ENCODE measurements at regions of chr15 and their contacts with region 1.

Region 1: DNA sequence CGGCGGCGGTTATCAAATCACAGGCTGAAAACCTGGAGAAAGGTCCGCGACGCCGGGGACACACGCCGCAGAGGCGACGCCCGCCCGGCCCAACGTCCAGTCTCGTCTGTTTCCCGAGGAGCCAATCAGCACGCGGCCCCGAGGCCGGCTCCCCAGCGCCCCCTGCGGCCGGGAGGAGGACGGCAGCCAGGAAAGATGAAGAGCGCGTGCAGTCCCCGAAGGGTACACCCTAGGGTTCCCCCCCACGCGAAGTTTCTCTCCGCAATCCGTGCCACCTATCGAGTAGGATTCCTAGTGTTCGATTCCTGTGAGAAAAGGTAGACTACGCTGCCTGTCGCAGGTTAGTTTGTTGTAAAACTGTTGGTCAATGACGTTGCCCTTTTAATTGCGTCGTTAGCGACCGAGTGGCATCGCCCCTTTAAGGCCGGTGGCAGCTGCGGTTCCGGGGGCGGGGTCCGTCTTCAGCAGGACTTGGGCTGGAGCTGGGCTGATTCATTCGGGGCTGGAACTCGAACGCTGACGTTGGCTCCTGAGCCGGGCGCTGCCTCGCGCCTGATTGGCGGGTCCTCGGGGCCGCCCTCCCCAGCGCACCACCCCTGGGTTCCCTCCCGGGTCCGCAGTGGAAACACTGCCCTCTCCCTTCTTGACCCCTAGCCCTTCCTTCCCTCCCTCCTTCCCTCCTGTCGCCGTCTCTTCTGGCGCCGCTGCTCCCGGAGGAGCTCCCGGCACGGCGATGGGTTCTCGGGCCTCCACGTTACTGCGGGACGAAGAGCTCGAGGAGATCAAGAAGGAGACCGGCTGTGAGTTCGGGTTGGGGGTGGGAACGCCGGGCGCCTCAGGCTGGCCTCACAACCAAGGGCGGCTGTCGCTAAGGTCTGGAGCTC is at the starts of genes CHP1 and EXD1:
- DNase-seq: peak; percentile 98 to 99 (median 99)
- H3K4me3 ChIP-seq: peak within 1 kb of the TSS; percentile 68 to 98 (median 88)
- H3K27ac ChIP-seq: peak within 1 kb of the TSS; percentile 93 to 96 (median 93)
- H3K4me1 ChIP-seq: peaks cover 17 to 22% of the 10 kb centered on the region in 2 donors
- H3K27me3 ChIP-seq: no peaks in the 10 kb centered on the region
- CTCF ChIP-seq: peak; percentile 92 to 96 (median 95)
- POLR2A ChIP-seq: peak; percentile 88 to 96
- total RNA-seq, gene CHP1: 106 to 387 (median 174) TPM
- total RNA-seq, gene EXD1: 0.11 TPM in 1 of 9 donors, not detected in the others

Region 2: GRCh38 chr15:41283653-41284426 is 52.9 kb after region 1 on chr15:
- intact Hi-C with region 1: loop called in 1 of 2 experiments (anchors 10 kb)
- DNase-seq: peak; percentile 99
- H3K4me3 ChIP-seq: peak overlapping the region; percentile 72 to 100 (median 80)
- H3K27ac ChIP-seq: peak overlapping the region; percentile 91 to 98 (median 94)
- H3K4me1 ChIP-seq: peaks cover 38% of the 10 kb centered on the region in 2 donors
- H3K27me3 ChIP-seq: no peaks in the 10 kb centered on the region
- CTCF ChIP-seq: no peak
- POLR2A ChIP-seq: peak; percentile 89 to 97

Region 3: DNA sequence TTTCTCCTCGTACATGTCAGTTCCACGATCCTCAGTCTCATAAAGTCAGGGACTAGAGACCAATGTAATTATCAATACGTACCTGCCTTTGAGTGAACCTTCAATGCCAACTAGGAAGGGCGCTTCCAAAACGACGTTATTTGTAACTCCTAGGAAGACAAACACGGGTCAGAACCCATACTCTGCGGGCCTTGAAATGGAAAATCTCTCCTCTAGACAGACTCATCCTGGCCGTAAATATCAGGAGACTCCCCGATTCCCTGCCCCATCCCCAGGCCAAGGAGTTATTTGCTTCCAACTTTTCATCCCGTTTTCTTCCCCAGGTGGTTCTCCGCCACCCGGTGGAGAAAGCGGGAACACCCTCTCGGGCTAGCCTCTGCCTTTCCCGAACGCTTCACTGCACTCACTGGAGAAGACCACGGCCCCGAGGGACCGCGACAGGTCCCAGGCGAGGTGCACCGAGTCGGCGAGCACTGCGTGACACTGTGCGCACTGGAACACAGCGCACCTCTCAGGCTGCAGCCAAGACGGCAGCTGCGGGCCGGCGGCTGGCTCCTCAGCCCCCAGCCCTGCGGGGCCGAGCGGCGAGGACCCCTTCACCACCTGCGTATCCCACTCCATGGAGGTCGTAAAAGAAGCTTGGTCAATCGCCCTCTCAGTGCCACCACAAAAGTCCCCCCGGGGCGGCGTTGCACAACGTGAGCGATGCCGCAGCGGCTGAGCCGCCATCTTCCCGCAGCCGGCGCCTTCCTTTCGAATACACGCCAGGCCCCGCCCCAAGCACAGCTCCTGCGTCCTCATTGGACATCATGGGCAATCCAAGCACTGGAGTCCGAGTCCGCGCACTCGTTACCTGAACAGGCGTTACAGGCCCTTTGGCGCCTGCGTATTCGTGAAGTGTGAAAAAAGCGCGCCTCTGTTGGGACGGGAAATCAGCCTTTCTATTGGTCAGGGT is 101.2 kb after region 1 on chr15 and contains the start of gene OIP5:
- intact Hi-C with region 1: loop called in 1 of 2 experiments (anchors 5 kb)
- DNase-seq: peak; percentile 98 to 100 (median 99)
- H3K4me3 ChIP-seq: peak within 1 kb of the TSS; percentile 31 to 89 (median 62)
- H3K27ac ChIP-seq: peak within 1 kb of the TSS; percentile 57 to 91 (median 78)
- H3K4me1 ChIP-seq: peaks cover 10 to 15% of the 10 kb centered on the region in 2 donors
- H3K27me3 ChIP-seq: no peaks in the 10 kb centered on the region
- CTCF ChIP-seq: peak; percentile 69 to 83 (median 73)
- POLR2A ChIP-seq: no peak
- total RNA-seq, gene OIP5: 0.28 to 8.2 (median 2.8) TPM

Region 4: DNA sequence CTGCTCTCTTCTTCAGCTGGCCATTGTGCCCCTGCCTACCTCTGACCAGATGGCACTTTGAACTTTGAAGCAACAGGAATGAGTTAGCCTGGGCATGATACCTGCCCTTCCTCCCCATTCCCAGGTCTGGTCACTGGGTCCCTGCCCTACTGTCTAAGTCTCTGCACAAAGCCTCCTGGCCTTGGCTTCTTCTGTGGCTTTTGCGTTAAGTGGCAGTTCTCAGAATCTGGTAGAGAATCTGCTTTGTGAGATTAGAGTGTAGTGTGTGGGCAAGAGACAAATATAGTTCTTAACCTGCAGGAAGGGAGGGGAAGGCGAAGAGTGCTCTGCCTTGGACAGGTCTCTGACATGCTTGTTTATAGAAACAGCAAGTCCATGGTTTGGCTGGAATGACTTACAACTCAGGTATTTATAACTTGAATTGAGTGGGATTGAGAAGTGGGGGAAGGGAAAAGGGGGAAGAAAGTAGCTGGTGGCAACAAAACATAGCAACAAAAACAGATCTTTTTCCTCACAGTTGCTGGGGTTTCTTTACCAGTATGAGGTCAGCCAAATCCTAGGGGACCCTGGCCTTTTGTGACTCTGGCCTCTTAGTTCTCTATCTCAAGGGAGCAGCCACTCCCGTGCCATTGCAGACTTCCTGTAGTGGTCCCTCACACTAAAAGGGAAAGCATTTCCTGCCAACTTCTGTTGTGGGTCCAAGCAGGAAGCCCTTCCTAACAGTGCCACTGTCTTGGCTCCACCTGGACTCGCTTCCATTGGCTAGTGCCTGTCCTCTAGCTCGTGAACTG is 560.1 kb after region 1 on chr15:
- intact Hi-C with region 1: no loop called
- DNase-seq: peak in 2 of 7 donors; percentile 42 to 63
- H3K4me3 ChIP-seq: no peak overlapping the region
- H3K27ac ChIP-seq: peak overlapping the region in 2 of 5 donors; percentile 26 to 64
- H3K4me1 ChIP-seq: peaks cover 0 to 34% of the 10 kb centered on the region in 2 donors
- H3K27me3 ChIP-seq: no peaks in the 10 kb centered on the region
- CTCF ChIP-seq: no peak
- POLR2A ChIP-seq: no peak